Panc1 (cell line): ENCODE measurements at regions of chr1 and their contacts with region 1.

Region 1: GRCh38 chr1:244835276-244836134 is at the start of gene COX20:
- DNase-seq: peak; percentile 50
- ATAC-seq: peak; percentile 80
- H3K4me3 ChIP-seq: peak within 1 kb of the TSS; percentile 67 to 96
- H3K27ac ChIP-seq: peak within 1 kb of the TSS; percentile 100
- H3K4me1 ChIP-seq: peaks cover 38% of the 10 kb centered on the region
- H3K27me3 ChIP-seq: no peaks in the 10 kb centered on the region
- CTCF ChIP-seq: no peak
- total RNA-seq, gene COX20: 55.0 TPM

Region 2: GRCh38 chr1:244815600-244816099 is 19.9 kb before region 1 on chr1:
- CTCF ChIA-PET with region 1: no interaction called
- POLR2A ChIA-PET with region 1: no interaction called
- in situ Hi-C with region 1: no loop called
- intact Hi-C with region 1: no loop called
- DNase-seq: no peak
- ATAC-seq: no peak
- H3K4me3 ChIP-seq: no peak overlapping the region
- H3K27ac ChIP-seq: no peak overlapping the region
- H3K4me1 ChIP-seq: no peaks in the 10 kb centered on the region
- H3K27me3 ChIP-seq: no peaks in the 10 kb centered on the region
- CTCF ChIP-seq: no peak

Region 3: GRCh38 chr1:244864253-244865027 is 28.9 kb after region 1 on chr1 and contains the start of gene HNRNPU:
- CTCF ChIA-PET with region 1: no interaction called
- POLR2A ChIA-PET with region 1: interaction called, 11 read pairs
- in situ Hi-C with region 1: no loop called
- intact Hi-C with region 1: no loop called
- DNase-seq: peak; percentile 78
- ATAC-seq: peak; percentile 85
- H3K4me3 ChIP-seq: peak within 1 kb of the TSS; percentile 77 to 88
- H3K27ac ChIP-seq: peak within 1 kb of the TSS; percentile 100
- H3K4me1 ChIP-seq: peaks cover 35% of the 10 kb centered on the region
- H3K27me3 ChIP-seq: no peaks in the 10 kb centered on the region
- CTCF ChIP-seq: no peak
- total RNA-seq, gene HNRNPU: 361 TPM

Region 4: GRCh38 chr1:245046769-245047168 is 211.3 kb after region 1 on chr1:
- CTCF ChIA-PET with region 1: no interaction called
- POLR2A ChIA-PET with region 1: interaction called, 11 read pairs
- in situ Hi-C with region 1: no loop called
- intact Hi-C with region 1: loop called (anchors 5 kb)
- DNase-seq: no peak
- ATAC-seq: no peak
- H3K4me3 ChIP-seq: no peak overlapping the region
- H3K27ac ChIP-seq: no peak overlapping the region
- H3K4me1 ChIP-seq: peaks cover 18% of the 10 kb centered on the region
- H3K27me3 ChIP-seq: no peaks in the 10 kb centered on the region
- CTCF ChIP-seq: no peak

Region 5: GRCh38 chr1:246566128-246566812 is 1730.8 kb after region 1 on chr1 and contains the starts of genes CNST and TFB2M:
- CTCF ChIA-PET with region 1: no interaction called
- POLR2A ChIA-PET with region 1: no interaction called
- in situ Hi-C with region 1: no loop called
- intact Hi-C with region 1: loop called (anchors 5 kb)
- DNase-seq: peak; percentile 96
- ATAC-seq: peak; percentile 97
- H3K4me3 ChIP-seq: peak within 1 kb of the TSS; percentile 69 to 100
- H3K27ac ChIP-seq: peak within 1 kb of the TSS; percentile 94
- H3K4me1 ChIP-seq: peaks cover 24% of the 10 kb centered on the region
- H3K27me3 ChIP-seq: no peaks in the 10 kb centered on the region
- CTCF ChIP-seq: no peak
- total RNA-seq, gene CNST: 18.5 TPM
- total RNA-seq, gene TFB2M: 21.0 TPM